Tibial artery (tissue), 4 donors: ENCODE measurements at regions of chrX and their contacts with region 1.

Region 1: DNA sequence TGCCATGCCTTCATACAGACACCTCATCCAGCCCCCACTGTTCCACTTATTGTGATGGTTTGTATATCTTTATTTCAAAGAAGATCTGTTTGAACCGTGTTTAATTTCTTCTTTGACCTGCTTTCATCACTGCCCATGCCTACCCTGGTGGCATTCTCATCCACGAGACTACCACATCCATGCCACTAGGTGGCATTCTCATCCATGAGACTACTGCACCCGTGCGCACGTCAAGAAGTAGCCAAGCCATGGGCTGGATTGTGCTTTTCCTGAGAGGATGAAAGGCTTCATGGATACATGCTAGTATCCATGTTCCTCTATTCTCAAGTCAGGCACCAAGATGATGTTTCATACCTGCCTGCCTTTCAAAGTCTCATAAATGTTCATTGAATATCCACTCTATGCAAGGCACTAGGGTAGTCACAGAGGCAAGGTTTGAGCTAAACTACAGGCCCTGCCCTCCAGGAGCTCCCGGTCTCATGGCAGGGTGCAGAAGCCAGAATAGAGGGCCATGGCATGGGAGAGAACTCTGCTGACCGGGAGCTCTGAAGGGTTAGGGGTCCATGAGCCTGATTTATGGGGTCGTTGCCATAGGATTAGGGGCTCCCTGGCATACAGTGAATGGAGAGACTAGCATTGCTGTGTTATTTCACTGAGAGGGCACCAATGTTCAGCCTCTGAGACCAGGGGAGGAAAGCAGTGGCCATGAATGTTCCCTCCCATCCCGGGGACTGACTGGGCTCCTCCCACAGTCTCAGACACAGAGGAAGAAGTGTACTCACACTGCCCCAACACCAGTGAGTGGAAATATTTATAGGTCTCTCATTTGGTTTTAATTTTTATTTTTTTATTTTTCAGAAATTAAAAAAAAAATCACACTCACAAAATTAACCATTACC is 24.8 kb upstream of the EOLA2 start:
- DNase-seq: peak; percentile 50 to 73
- H3K4me3 ChIP-seq: no peak overlapping the region
- H3K27ac ChIP-seq: peak overlapping the region in 1 of 2 donors; percentile 39
- H3K4me1 ChIP-seq: peaks cover 0 to 3% (median 0%) of the 10 kb centered on the region in 4 donors
- H3K27me3 ChIP-seq: no peaks in the 10 kb centered on the region
- CTCF ChIP-seq: peak; percentile 59 to 64

Region 2: GRCh38 chrX:150362599-150363481 is 399.7 kb after region 1 on chrX and contains the start of gene MAMLD1:
- intact Hi-C with region 1: loop called (anchors 5 kb)
- DNase-seq: peak; percentile 84 to 88
- H3K4me3 ChIP-seq: peak within 1 kb of the TSS; percentile 57 to 68
- H3K27ac ChIP-seq: peak within 1 kb of the TSS; percentile 91 to 96
- H3K4me1 ChIP-seq: peaks cover 0 to 14% (median 5%) of the 10 kb centered on the region in 4 donors
- H3K27me3 ChIP-seq: no peaks in the 10 kb centered on the region
- CTCF ChIP-seq: no peak